ENCODE measurements at regions of chr2 and their contacts with region 1.

Region 1: GRCh38 chr2:234625626-234626250 is 128.9 kb upstream of the ARL4C start:
- DNase-seq: no peak
- H3K4me3 ChIP-seq: no peak overlapping the region
- H3K27ac ChIP-seq: no peak overlapping the region
- H3K4me1 ChIP-seq: peaks cover 9% of the 10 kb centered on the region
- H3K27me3 ChIP-seq: no peaks in the 10 kb centered on the region
- CTCF ChIP-seq: no peak

Region 2: GRCh38 chr2:234571620-234572407 is 53.9 kb before region 1 on chr2:
- CTCF ChIA-PET with region 1: no interaction called
- dilution Hi-C with region 1: loop called (anchors 5 kb)
- in situ Hi-C with region 1: no loop called
- intact Hi-C with region 1: no loop called
- DNase-seq: no peak
- H3K4me3 ChIP-seq: no peak overlapping the region
- H3K27ac ChIP-seq: no peak overlapping the region
- H3K4me1 ChIP-seq: no peaks in the 10 kb centered on the region
- H3K27me3 ChIP-seq: peaks cover 2% of the 10 kb centered on the region
- CTCF ChIP-seq: no peak

Region 3: GRCh38 chr2:234674781-234675201 is 49.1 kb after region 1 on chr2:
- CTCF ChIA-PET with region 1: interaction called, 4 read pairs
- dilution Hi-C with region 1: loop called (anchors 5 kb)
- in situ Hi-C with region 1: no loop called
- intact Hi-C with region 1: no loop called
- DNase-seq: peak; percentile 23
- H3K4me3 ChIP-seq: no peak overlapping the region
- H3K27ac ChIP-seq: no peak overlapping the region
- H3K4me1 ChIP-seq: peaks cover 48% of the 10 kb centered on the region
- H3K27me3 ChIP-seq: no peaks in the 10 kb centered on the region
- CTCF ChIP-seq: no peak

Region 4: GRCh38 chr2:234763002-234763873 is 137.5 kb after region 1 on chr2:
- CTCF ChIA-PET with region 1: no interaction called
- dilution Hi-C with region 1: no loop called
- in situ Hi-C with region 1: no loop called
- intact Hi-C with region 1: no loop called
- DNase-seq: no peak
- H3K4me3 ChIP-seq: no peak overlapping the region
- H3K27ac ChIP-seq: no peak overlapping the region
- H3K4me1 ChIP-seq: no peaks in the 10 kb centered on the region
- H3K27me3 ChIP-seq: no peaks in the 10 kb centered on the region
- CTCF ChIP-seq: no peak